GM10248 (cell line): ENCODE measurements at regions of chr2 and their contacts with region 1.

Region 1: GRCh38 chr2:47414682-47415458 is 11.9 kb downstream of the MSH2 start:
- DNase-seq: no peak
- CTCF ChIP-seq: no peak

Region 2: GRCh38 chr2:47437287-47437686 is 22.4 kb after region 1 on chr2:
- CTCF ChIA-PET with region 1: interaction called, 3 read pairs
- POLR2A ChIA-PET with region 1: interaction called, 10 read pairs
- DNase-seq: peak; percentile 26
- CTCF ChIP-seq: peak; percentile 23

Region 3: DNA sequence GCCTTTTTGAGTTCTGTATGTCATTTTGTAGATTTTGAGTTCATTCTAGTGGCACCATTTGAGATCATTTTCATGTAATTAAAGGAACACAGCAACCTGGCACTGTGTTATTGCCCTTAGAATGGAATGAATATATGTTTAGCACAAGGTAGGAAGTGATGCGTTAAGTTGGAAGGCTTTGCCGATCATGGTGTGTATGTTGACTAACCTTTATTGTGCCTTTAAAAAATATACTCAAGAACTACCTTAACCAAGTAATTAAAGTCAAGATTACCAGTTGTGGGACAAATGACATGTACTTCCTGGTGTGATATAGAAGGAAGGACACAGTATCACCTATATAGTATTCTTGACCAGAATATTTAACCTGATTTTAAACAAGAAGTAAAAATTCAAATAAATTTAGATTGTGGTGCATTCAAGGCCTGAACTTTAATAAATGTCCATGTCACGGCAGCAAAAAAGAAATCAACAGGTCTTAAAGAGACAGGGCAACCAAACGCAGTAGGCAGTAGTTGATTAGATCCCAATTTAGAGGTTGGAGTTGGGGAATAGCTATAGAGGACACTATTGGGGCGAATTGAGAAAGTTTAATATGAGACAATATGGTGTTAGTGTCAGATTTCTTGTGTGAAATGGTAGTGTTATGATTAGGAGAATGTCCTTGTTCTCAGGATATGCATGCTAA is 56.7 kb after region 1 on chr2:
- CTCF ChIA-PET with region 1: no interaction called
- POLR2A ChIA-PET with region 1: no interaction called
- DNase-seq: no peak
- CTCF ChIP-seq: no peak